ENCODE measurements at regions of chr1 and their contacts with region 1.

Region 1: DNA sequence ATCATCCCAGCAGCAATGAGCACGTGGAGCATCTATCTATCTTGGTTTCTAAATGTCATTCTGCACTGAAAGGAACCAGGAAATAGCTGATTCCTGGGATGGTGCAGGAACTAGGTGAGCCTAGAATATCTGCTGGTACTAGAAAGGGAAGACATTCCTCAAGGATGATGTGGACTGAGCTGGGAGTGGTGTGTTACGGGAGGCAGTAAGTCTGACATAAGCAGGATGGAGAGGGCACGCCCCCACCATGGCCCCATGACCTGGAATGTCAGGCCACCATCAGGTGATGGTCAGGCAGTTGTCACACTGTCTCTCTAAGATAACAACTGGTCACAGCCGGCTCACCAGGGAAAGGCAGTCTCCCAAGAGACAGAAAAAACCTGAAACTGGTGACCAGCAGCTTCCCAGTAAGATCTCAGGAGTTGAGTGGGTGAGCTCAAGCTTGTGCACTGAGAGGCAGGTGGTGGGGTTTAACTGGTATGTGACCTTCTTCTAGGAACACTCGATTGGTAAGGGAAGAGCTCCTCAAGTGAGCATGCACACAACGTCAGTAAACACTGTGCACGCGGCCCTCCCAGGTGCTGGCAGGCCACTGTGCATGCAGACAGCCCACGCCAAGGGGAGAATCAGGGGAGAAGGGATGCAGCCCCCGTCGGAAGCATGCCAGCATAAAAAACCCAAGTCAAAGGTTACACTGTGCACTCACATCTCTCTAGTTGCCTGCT is 148.7 kb downstream of the ADSS2 start:
- DNase-seq: no peak
- ATAC-seq: no peak
- H3K4me3 Mint-ChIP-seq: no peak overlapping the region
- H3K27ac Mint-ChIP-seq: no peak overlapping the region
- H3K4me1 Mint-ChIP-seq: peaks cover 9% of the 10 kb centered on the region
- H3K27me3 Mint-ChIP-seq: peaks cover 8% of the 10 kb centered on the region

Region 2: DNA sequence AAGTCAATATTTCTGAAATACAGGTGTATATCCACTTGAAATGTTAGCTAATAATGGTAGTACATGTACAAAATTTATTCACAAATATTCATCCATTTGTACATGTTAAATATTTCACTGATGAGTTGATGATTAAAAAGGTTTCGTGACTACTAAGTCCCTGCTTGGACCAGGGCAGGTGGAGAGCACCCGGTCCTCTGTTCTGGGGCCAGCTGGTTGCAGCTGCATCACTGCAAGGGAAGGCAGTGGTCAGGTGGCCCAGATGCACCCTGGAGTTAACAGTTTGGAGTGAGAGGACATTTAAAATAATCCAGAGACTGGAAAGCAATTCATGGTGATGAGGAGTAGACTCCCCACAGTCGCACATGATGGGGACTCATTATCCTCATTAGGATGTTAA is 110.7 kb before region 1 on chr1:
- CTCF ChIA-PET with region 1: no interaction called
- POLR2A ChIA-PET with region 1: no interaction called
- DNase-seq: no peak
- ATAC-seq: no peak
- H3K4me3 Mint-ChIP-seq: no peak overlapping the region
- H3K27ac Mint-ChIP-seq: no peak overlapping the region
- H3K4me1 Mint-ChIP-seq: no peaks in the 10 kb centered on the region
- H3K27me3 Mint-ChIP-seq: no peaks in the 10 kb centered on the region

Region 3: GRCh38 chr1:244205171-244205570 is 97.9 kb before region 1 on chr1:
- CTCF ChIA-PET with region 1: no interaction called
- POLR2A ChIA-PET with region 1: no interaction called
- DNase-seq: no peak
- ATAC-seq: no peak
- H3K4me3 Mint-ChIP-seq: no peak overlapping the region
- H3K27ac Mint-ChIP-seq: no peak overlapping the region
- H3K4me1 Mint-ChIP-seq: no peaks in the 10 kb centered on the region
- H3K27me3 Mint-ChIP-seq: peaks cover 4% of the 10 kb centered on the region

Region 4: DNA sequence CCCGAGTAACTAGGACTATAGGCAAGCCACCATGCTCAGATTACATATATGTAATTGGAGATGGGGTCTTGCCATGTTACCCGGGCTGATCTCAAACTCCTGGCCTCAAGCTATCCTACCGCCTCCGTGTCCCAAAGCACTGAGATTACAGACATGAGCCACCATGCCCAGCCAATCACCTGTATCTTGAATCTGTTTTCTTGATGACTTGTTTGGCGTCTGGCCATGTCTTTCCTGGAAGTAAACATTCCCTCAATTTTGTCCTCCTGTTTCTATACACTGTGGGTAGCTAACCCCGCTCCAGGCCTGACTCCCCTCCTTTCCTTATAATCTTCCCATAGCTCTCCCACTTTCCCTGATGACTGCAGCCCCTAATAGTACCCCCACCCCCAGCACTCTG is 13.1 kb before region 1 on chr1:
- CTCF ChIA-PET with region 1: interaction called, 26 read pairs
- POLR2A ChIA-PET with region 1: no interaction called
- DNase-seq: no peak
- ATAC-seq: no peak
- H3K4me3 Mint-ChIP-seq: no peak overlapping the region
- H3K27ac Mint-ChIP-seq: no peak overlapping the region
- H3K4me1 Mint-ChIP-seq: peaks cover 17% of the 10 kb centered on the region
- H3K27me3 Mint-ChIP-seq: peaks cover 13% of the 10 kb centered on the region

Region 5: DNA sequence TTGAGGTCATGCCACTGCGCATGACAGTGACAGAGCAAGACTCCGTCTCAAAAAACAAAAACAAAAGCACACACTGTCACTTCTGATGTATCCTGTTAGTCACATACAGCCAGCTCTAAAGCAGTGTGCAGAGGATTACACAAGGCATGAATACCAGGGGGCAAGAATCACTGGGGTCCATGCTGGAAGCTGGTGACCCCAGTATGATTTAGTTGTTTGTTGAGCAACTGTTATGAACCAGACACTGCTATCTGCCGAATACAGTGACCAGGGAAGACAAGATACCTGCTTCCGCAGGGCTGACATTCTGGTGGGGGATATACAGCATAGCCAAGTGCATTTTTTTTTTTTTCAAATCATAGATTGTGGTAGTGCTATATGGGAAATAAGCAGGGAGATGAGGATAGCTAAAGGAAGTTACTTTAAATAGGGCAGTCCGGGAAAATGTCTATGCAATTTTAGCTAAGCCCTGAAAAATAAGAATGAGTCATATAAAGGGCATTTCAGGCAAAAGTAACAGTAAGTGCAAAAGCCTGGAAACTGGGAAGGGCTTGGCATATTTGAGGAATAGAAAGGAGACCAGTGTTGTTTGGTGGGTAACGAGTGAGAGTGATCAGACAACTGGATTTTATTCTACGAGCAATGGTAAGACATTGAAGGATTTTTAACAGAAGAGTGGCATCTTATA is 79.0 kb after region 1 on chr1:
- CTCF ChIA-PET with region 1: no interaction called
- POLR2A ChIA-PET with region 1: no interaction called
- DNase-seq: no peak
- ATAC-seq: no peak
- H3K4me3 Mint-ChIP-seq: no peak overlapping the region
- H3K27ac Mint-ChIP-seq: no peak overlapping the region
- H3K4me1 Mint-ChIP-seq: no peaks in the 10 kb centered on the region
- H3K27me3 Mint-ChIP-seq: no peaks in the 10 kb centered on the region